Panc1 (cell line): ENCODE measurements at regions of chr2 and their contacts with region 1.

Region 1: DNA sequence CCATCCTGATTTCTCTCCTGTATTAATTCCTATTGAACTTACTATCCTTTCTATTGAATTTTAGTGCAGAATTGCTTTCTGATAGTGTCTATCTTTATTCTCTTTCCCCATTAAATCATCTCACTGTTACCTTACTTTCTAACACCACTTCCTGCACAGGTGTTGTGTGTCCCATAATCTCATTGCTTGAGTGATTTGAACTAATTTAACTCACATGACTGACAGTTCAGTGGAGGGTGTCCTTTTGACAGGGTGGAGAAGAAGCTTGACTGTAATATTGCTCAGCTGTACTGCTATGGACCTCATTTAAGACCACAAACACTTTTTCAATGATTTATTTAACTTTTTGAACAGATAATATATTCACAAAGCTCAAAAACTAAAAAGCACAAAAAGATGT is 211.8 kb downstream of the NRXN1 start:
- DNase-seq: no peak
- ATAC-seq: no peak
- H3K4me3 ChIP-seq: no peak overlapping the region
- H3K27ac ChIP-seq: no peak overlapping the region
- H3K4me1 ChIP-seq: no peaks in the 10 kb centered on the region
- H3K27me3 ChIP-seq: no peaks in the 10 kb centered on the region
- CTCF ChIP-seq: no peak

Region 2: GRCh38 chr2:50641633-50642032 is 178.5 kb before region 1 on chr2:
- CTCF ChIA-PET with region 1: no interaction called
- POLR2A ChIA-PET with region 1: interaction called, 18 read pairs
- in situ Hi-C with region 1: no loop called
- intact Hi-C with region 1: no loop called
- DNase-seq: no peak
- ATAC-seq: no peak
- H3K4me3 ChIP-seq: no peak overlapping the region
- H3K27ac ChIP-seq: no peak overlapping the region
- H3K4me1 ChIP-seq: no peaks in the 10 kb centered on the region
- H3K27me3 ChIP-seq: no peaks in the 10 kb centered on the region
- CTCF ChIP-seq: no peak